ENCODE measurements at regions of chr5 and their contacts with region 1.

Region 1: GRCh38 chr5:14270209-14270702 is 127.1 kb downstream of the TRIO start:
- DNase-seq: peak in 1 of 2 donors; percentile 70
- ATAC-seq: peak; percentile 87
- H3K4me3 ChIP-seq: no peak overlapping the region
- H3K27ac ChIP-seq: peak overlapping the region in 1 of 2 donors; percentile 37
- H3K4me1 ChIP-seq: peaks cover 10 to 14% of the 10 kb centered on the region in 2 donors
- H3K27me3 ChIP-seq: no peaks in the 10 kb centered on the region

Region 2: GRCh38 chr5:13987843-13988464 is 282.3 kb before region 1 on chr5:
- intact Hi-C with region 1: loop called (anchors 5 kb)
- DNase-seq: peak in 1 of 2 donors; percentile 58
- ATAC-seq: no peak
- H3K4me3 ChIP-seq: no peak overlapping the region
- H3K27ac ChIP-seq: no peak overlapping the region
- H3K4me1 ChIP-seq: no peaks in the 10 kb centered on the region
- H3K27me3 ChIP-seq: no peaks in the 10 kb centered on the region

Measured in aorta (tissue), 5 donors.